SK-N-SH (cell line): ENCODE measurements at regions of chr17 and their contacts with region 1.

Region 1: GRCh38 chr17:76182016-76182764 is 41.1 kb upstream of the FOXJ1 start:
- DNase-seq: peak; percentile 94
- H3K4me3 ChIP-seq: no peak overlapping the region; a peak in 1 of 4 replicates
- H3K27ac ChIP-seq: no peak overlapping the region
- H3K4me1 ChIP-seq: peaks cover 0 to 3% of the 10 kb centered on the region in 2 experiments; a peak in 1 of 4 replicates
- H3K27me3 ChIP-seq: no peaks in the 10 kb centered on the region
- CTCF ChIP-seq: peak; percentile 99
- EP300 ChIP-seq: peak in 1 of 2 experiments; percentile 31; a peak in 1 of 4 replicates
- RAD21 ChIP-seq: peak; percentile 76

Region 2: GRCh38 chr17:76071531-76072147 is 110.6 kb before region 1 on chr17:
- CTCF ChIA-PET with region 1: no interaction called
- POLR2A ChIA-PET with region 1: no interaction called
- DNase-seq: no peak
- H3K4me3 ChIP-seq: peak overlapping the region; percentile 78 to 82
- H3K27ac ChIP-seq: peak overlapping the region; percentile 41 to 61; a peak in 2 of 4 replicates
- H3K4me1 ChIP-seq: peaks cover 0 to 12% of the 10 kb centered on the region in 2 experiments; a peak in 3 of 4 replicates
- H3K27me3 ChIP-seq: peaks cover 33% of the 10 kb centered on the region
- CTCF ChIP-seq: no peak
- EP300 ChIP-seq: no peak
- RAD21 ChIP-seq: no peak

Region 3: DNA sequence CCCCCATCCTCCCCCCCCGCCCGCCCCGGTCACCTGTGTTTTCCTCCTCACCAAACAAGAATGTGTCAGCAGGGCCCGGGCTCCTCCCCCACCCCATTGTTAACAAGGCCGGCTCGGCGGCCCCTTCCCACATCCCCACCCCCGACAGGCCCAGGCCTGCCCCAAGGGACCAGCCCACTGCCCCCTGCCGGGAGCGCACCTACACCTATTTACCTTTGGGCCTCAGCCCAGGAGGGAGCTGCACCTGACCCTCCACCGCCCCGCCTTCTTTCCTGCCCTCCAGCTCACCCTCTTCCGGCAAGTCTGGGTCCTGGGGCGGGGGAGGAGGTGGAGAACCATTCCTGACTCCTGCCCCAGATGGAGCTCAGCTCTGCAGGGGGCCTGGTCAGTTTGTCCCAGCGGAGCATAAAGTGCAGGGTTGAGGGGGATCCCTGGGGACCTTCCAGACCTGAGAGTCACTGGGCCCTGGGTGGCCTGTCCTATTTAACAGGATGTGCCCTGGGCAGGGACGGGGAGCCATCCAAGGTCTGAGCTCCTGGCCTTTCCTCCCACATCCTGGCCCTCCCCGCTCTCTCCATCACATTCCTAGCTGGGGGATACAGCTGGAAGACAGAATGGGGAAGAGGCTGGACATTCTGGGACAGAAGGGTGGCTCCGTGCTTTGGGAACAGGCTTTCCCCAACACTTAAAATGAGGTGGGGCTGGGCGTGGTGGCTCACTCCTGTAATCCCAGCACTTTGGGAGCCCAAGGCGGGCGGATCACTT is 49.4 kb before region 1 on chr17:
- CTCF ChIA-PET with region 1: interaction called, 193 read pairs
- POLR2A ChIA-PET with region 1: no interaction called
- DNase-seq: no peak
- H3K4me3 ChIP-seq: no peak overlapping the region
- H3K27ac ChIP-seq: no peak overlapping the region
- H3K4me1 ChIP-seq: no peaks in the 10 kb centered on the region
- H3K27me3 ChIP-seq: no peaks in the 10 kb centered on the region
- CTCF ChIP-seq: no peak
- EP300 ChIP-seq: no peak
- RAD21 ChIP-seq: no peak

Region 4: GRCh38 chr17:76153640-76154039 is 28.6 kb before region 1 on chr17:
- CTCF ChIA-PET with region 1: interaction called, 27 read pairs
- POLR2A ChIA-PET with region 1: no interaction called
- DNase-seq: no peak
- H3K4me3 ChIP-seq: no peak overlapping the region
- H3K27ac ChIP-seq: no peak overlapping the region
- H3K4me1 ChIP-seq: no peaks in the 10 kb centered on the region
- H3K27me3 ChIP-seq: no peaks in the 10 kb centered on the region
- CTCF ChIP-seq: peak; percentile 37
- EP300 ChIP-seq: no peak
- RAD21 ChIP-seq: no peak; the same call in 1 of the 2 replicates

Region 5: GRCh38 chr17:76166168-76166567 is 16.0 kb before region 1 on chr17:
- CTCF ChIA-PET with region 1: interaction called, 64 read pairs
- POLR2A ChIA-PET with region 1: interaction called, 4 read pairs
- DNase-seq: no peak
- H3K4me3 ChIP-seq: no peak overlapping the region
- H3K27ac ChIP-seq: no peak overlapping the region
- H3K4me1 ChIP-seq: no peaks in the 10 kb centered on the region
- H3K27me3 ChIP-seq: no peaks in the 10 kb centered on the region
- CTCF ChIP-seq: no peak
- EP300 ChIP-seq: no peak
- RAD21 ChIP-seq: no peak

Region 6: GRCh38 chr17:76217081-76217480 is 34.9 kb after region 1 on chr17:
- CTCF ChIA-PET with region 1: interaction called, 13 read pairs
- POLR2A ChIA-PET with region 1: no interaction called
- DNase-seq: no peak
- H3K4me3 ChIP-seq: no peak overlapping the region
- H3K27ac ChIP-seq: no peak overlapping the region
- H3K4me1 ChIP-seq: no peaks in the 10 kb centered on the region
- H3K27me3 ChIP-seq: no peaks in the 10 kb centered on the region
- CTCF ChIP-seq: no peak
- EP300 ChIP-seq: no peak
- RAD21 ChIP-seq: no peak

Region 7: GRCh38 chr17:76909971-76910760 is 728.0 kb after region 1 on chr17:
- CTCF ChIA-PET with region 1: no interaction called
- POLR2A ChIA-PET with region 1: no interaction called
- DNase-seq: no peak
- H3K4me3 ChIP-seq: no peak overlapping the region
- H3K27ac ChIP-seq: no peak overlapping the region
- H3K4me1 ChIP-seq: peaks cover 0 to 9% of the 10 kb centered on the region in 2 experiments; a peak in 1 of 4 replicates
- H3K27me3 ChIP-seq: no peaks in the 10 kb centered on the region
- CTCF ChIP-seq: no peak
- EP300 ChIP-seq: no peak
- RAD21 ChIP-seq: no peak